Activated CD4-positive, alpha-beta memory T cell treated with anti-CD3 and anti-CD28 coated beads, Interleukin-2, amount 10 ng/mL, durations not matched to agents 7 days and 5 days (primary cell): ENCODE measurements at regions of chr5 and their contacts with region 1.

Region 1: DNA sequence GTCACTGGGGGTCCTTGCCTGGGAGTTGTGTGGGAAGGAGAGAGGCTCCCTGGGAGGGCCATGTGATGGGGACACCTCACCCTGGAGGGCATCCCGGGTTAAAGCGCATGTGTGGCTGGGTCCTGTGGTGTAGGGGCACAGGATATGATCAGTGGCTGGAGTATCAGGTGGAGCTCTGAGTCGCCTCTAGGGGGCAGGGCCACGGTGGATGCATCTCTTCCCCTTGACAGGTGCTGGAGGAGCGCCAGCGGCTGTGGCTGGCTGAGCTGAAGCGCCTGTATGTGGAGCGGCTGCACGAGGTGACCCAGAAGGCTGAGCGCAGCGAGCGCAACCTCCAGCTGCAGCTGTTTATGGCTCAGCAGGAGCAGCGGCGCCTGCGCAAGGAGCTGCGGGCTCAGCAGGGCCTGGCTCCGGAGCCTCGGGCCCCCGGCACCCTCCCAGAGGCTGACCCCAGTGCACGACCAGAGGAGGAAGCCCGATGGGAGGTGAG is 7.6 kb downstream of the N4BP3 start:
- DNase-seq: peak; percentile 86
- H3K4me3 Mint-ChIP-seq: no peak overlapping the region
- H3K27ac Mint-ChIP-seq: no peak overlapping the region
- H3K4me1 Mint-ChIP-seq: peaks cover 20% of the 10 kb centered on the region
- H3K27me3 Mint-ChIP-seq: peaks cover 8% of the 10 kb centered on the region

Region 2: DNA sequence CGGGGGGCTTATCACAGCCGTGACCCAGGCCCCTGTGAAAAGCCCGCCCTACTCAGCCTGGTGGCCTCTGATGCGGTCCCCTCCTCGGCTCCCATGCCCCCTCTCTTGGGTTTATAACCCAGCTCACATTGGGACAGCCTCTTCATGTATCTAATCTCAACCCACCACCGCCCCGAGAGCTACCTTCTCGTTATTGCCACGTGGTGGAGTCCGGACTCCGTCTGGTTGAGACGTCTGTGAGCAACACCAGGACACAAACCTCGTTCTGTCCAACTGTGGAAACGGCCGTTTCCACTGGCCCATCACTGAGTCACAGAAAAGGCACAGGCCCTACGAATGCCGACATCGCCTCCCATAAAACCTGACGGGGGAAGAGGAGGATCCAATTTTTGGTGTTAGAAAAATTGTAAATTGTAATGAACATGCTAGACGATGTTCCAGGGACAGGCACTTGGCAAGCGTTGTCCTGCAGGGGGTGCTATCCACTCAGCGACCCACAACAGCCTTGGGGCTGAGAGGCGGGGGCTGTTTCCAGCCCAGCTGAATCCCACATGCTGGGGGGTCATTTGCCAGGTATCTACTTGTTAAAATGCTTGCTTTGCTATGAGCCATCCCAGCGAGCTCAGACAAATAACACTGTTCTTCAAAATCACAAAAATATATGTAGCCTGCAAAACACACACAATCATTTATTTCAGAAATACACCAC is 44.9 kb before region 1 on chr5:
- CTCF ChIA-PET with region 1: interaction called, 19 read pairs
- POLR2A ChIA-PET with region 1: no interaction called
- DNase-seq: peak; percentile 79
- H3K4me3 Mint-ChIP-seq: no peak overlapping the region
- H3K27ac Mint-ChIP-seq: no peak overlapping the region
- H3K4me1 Mint-ChIP-seq: peaks cover 6% of the 10 kb centered on the region
- H3K27me3 Mint-ChIP-seq: peaks cover 13% of the 10 kb centered on the region

Region 3: DNA sequence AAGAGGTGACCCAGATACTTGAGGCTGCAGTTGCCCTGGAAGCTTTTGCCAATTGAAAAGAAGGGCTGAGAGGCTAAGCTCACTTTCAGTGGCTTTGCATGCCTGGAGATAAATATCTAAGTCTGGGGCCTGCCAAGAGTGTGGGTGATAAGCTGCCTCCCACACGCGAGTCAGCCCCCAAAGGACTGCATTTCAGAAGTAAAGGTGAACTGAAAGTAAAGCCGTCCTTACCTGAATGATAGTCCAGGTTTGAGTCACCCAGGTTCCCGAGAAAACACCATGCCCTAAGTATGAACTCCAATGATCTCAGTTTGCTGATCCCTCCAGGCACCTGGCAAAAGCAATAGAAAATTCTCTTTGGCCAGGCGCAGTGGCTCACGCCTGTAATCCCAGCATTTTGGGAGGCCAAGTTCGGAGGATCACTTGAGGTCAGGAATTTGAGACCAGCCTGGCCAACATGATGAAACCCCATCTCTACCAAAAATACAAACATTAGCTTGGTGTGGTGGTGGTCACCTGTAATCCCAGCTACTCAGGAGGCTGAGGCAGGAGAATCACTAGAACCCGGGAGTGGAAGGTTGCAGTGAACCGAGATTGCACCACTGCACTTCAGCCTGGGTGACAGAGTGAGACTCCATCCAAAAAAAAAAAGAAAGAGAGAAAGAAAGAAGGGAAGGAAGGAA is 29.9 kb before region 1 on chr5:
- CTCF ChIA-PET with region 1: interaction called, 13 read pairs
- POLR2A ChIA-PET with region 1: no interaction called
- DNase-seq: no peak
- H3K4me3 Mint-ChIP-seq: no peak overlapping the region
- H3K27ac Mint-ChIP-seq: no peak overlapping the region
- H3K4me1 Mint-ChIP-seq: peaks cover 8% of the 10 kb centered on the region
- H3K27me3 Mint-ChIP-seq: peaks cover 5% of the 10 kb centered on the region

Region 4: DNA sequence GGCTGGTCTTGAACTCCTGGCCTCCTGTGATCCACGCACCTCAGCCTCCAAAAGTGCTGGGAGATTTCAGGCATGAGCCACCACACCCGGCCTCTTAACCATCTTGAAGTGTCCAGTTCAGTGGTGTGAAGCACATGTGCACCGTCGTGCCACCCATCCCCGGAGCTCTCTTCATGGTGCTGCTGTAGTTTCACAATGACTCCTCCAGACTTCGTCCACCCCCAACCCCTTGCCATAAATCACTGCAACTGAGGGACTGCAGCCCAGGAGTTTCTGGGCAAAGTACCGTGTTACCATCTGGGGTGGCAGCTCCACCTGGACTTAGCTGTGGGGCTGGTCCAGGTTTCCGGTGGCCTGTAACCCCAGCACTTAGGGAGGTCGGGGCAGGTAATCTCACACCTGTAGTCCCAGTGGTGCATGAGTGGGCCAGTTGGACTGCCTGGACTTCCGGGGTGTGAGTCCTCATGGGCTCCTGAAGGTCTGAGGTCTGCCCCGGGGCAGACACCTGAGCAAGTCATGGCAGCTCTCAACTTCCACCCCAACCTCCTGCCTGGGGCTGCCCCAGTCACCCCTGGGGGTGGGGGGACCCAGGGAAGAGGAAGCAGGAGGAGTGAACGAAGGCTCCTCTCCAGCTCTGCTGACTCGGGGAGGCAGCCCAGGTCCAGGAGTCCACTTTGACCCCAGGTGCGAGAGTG is 14.2 kb before region 1 on chr5:
- CTCF ChIA-PET with region 1: interaction called, 11 read pairs
- POLR2A ChIA-PET with region 1: no interaction called
- DNase-seq: no peak
- H3K4me3 Mint-ChIP-seq: no peak overlapping the region
- H3K27ac Mint-ChIP-seq: no peak overlapping the region
- H3K4me1 Mint-ChIP-seq: peaks cover 8% of the 10 kb centered on the region
- H3K27me3 Mint-ChIP-seq: peaks cover 17% of the 10 kb centered on the region

Region 5: GRCh38 chr5:178137991-178138390 is 17.1 kb after region 1 on chr5:
- CTCF ChIA-PET with region 1: interaction called, 35 read pairs
- POLR2A ChIA-PET with region 1: interaction called, 3 read pairs
- DNase-seq: no peak
- H3K4me3 Mint-ChIP-seq: no peak overlapping the region
- H3K27ac Mint-ChIP-seq: no peak overlapping the region
- H3K4me1 Mint-ChIP-seq: peaks cover 5% of the 10 kb centered on the region
- H3K27me3 Mint-ChIP-seq: no peaks in the 10 kb centered on the region

Region 6: GRCh38 chr5:178146020-178146820 is 25.3 kb after region 1 on chr5:
- CTCF ChIA-PET with region 1: interaction called, 35 read pairs
- POLR2A ChIA-PET with region 1: interaction called, 7 read pairs
- DNase-seq: peak; percentile 74
- H3K4me3 Mint-ChIP-seq: no peak overlapping the region
- H3K27ac Mint-ChIP-seq: no peak overlapping the region
- H3K4me1 Mint-ChIP-seq: peaks cover 36% of the 10 kb centered on the region
- H3K27me3 Mint-ChIP-seq: no peaks in the 10 kb centered on the region

Region 7: GRCh38 chr5:178153573-178154343 is 32.8 kb after region 1 on chr5 and contains the start of gene NHP2:
- CTCF ChIA-PET with region 1: interaction called, 25 read pairs
- POLR2A ChIA-PET with region 1: interaction called, 7 read pairs
- DNase-seq: peak; percentile 99
- H3K4me3 Mint-ChIP-seq: peak within 1 kb of the TSS; percentile 97
- H3K27ac Mint-ChIP-seq: peak within 1 kb of the TSS; percentile 81
- H3K4me1 Mint-ChIP-seq: peaks cover 50% of the 10 kb centered on the region
- H3K27me3 Mint-ChIP-seq: no peaks in the 10 kb centered on the region
- total RNA-seq, gene NHP2: 101 to 106 TPM